A549 (cell line): ENCODE measurements at regions of chr5 and their contacts with region 1.

Region 1: DNA sequence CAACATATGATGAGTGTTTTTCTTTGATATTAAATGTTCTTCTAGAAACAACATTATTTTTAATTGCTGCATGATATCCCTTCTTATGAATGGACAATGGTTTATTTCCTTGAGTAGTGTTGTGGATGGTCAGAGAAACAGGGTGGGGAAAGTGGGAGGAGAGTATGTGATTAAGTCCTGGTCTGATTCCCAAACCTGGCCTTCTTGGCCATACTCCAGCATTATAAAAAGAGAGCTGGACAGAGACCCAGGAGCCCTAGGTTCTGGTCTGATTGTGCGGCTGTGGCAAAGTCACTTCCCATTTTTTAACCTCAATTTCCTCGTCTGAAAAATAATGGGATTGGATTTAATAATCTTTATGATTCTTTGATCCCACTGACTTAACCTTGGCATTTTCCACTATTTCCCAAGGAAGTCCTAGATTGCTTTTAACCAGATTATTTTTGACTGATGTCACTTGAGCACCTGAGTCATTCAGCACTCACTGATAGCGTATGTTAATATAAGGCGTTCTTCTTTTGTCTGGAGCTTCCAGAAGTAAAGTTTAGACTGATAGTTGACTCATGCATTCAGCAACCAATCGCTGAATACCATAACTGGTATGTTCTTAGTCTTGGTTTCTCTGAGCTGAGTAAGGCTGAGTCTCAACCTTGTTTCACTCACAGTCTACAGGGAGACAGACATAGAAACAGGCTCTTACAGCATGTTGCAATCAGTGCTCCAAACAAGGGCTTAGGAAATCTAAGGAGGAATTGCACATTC is 26.2 kb downstream of the OSMR start:
- DNase-seq: peak; percentile 88 to 97
- ATAC-seq: peak; percentile 99
- H3K4me3 ChIP-seq: no peak overlapping the region
- H3K27ac ChIP-seq: peak overlapping the region; percentile 86 to 87
- H3K4me1 ChIP-seq: peaks cover 63% of the 10 kb centered on the region
- CTCF ChIP-seq: no peak
- EP300 ChIP-seq: peak; percentile 84 to 86; a peak in 4 of 5 replicates
- POLR2A ChIP-seq: no peak
- RAD21 ChIP-seq: peak; percentile 3 to 41; a peak in 1 of 5 replicates

Region 2: DNA sequence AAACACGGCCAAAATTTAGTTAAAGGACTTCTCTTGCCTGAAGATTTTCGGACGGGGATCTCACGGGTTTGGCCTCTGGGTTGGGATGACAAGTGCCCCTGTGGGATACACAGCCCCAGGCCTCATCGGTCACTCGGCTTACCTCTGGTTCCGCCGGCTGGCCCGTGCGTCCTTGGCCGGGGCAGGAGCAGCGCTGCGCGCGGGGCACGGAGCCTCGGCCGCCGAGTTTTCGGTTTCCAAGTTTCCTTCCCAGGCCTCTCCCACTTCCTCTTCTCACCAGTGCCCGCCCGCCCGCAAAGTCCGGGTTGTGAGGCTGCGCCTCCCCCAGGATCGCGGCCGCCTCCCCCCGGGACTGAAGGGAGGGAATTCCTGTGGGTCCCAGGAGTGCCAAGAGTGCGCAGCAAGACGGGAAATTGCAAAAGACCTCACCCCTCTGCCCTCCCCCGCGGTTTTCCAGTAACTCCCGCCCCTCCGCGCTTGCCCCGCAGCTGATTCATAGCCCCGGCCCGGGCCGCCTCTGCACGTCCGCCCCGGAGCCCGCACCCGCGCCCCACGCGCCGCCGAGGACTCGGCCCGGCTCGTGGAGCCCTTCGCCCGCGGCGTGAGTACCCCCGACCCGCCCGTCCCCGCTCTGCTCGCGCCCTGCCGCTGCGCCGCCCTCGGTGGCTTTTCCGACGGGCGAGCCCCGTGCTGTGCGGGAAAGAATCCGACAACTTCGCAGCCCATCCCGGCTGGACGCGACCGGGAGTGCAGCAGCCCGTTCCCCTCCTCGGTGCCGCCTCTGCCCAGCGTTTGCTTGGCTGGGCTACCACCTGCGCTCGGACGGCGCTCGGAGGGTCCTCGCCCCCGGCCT is 26.2 kb before region 1 on chr5 and contains the start of gene OSMR:
- CTCF ChIA-PET with region 1: interaction called, 7 read pairs
- POLR2A ChIA-PET with region 1: interaction called, 59 read pairs
- DNase-seq: peak; percentile 95 to 96
- ATAC-seq: peak; percentile 93 to 94
- H3K4me3 ChIP-seq: peak within 1 kb of the TSS; percentile 94
- H3K27ac ChIP-seq: peak within 1 kb of the TSS; percentile 97 to 99
- H3K4me1 ChIP-seq: peaks cover 17% of the 10 kb centered on the region; the same call in 2 of the 3 replicates
- CTCF ChIP-seq: no peak
- EP300 ChIP-seq: peak; percentile 68 to 89; a peak in 3 of 5 replicates
- POLR2A ChIP-seq: peak; percentile 68
- RAD21 ChIP-seq: peak; percentile 13 to 39; a peak in 2 of 5 replicates
- polyA plus RNA-seq, gene OSMR: 92.4 and 133 TPM in 2 replicates

Region 3: GRCh38 chr5:38858839-38859238 is 13.1 kb before region 1 on chr5:
- CTCF ChIA-PET with region 1: no interaction called
- POLR2A ChIA-PET with region 1: interaction called, 10 read pairs
- DNase-seq: no peak
- ATAC-seq: no peak
- H3K4me3 ChIP-seq: no peak overlapping the region
- H3K27ac ChIP-seq: no peak overlapping the region
- H3K4me1 ChIP-seq: peaks cover 19% of the 10 kb centered on the region
- CTCF ChIP-seq: no peak
- EP300 ChIP-seq: no peak
- POLR2A ChIP-seq: no peak
- RAD21 ChIP-seq: no peak

Region 4: GRCh38 chr5:38889424-38889823 is 17.5 kb after region 1 on chr5:
- CTCF ChIA-PET with region 1: no interaction called
- POLR2A ChIA-PET with region 1: no interaction called
- DNase-seq: no peak
- ATAC-seq: no peak
- H3K4me3 ChIP-seq: no peak overlapping the region
- H3K27ac ChIP-seq: no peak overlapping the region
- H3K4me1 ChIP-seq: no peaks in the 10 kb centered on the region
- CTCF ChIP-seq: no peak
- EP300 ChIP-seq: no peak
- POLR2A ChIP-seq: no peak
- RAD21 ChIP-seq: no peak